GM12878 (cell line): ENCODE measurements at regions of chr6 and their contacts with region 1.

Region 1: GRCh38 chr6:137271245-137272183 is 52.3 kb upstream of the IFNGR1 start:
- DNase-seq: no peak
- ATAC-seq: peak; percentile 92
- H3K4me3 ChIP-seq: no peak overlapping the region
- H3K27ac ChIP-seq: no peak overlapping the region
- H3K4me1 ChIP-seq: peaks cover 3% of the 10 kb centered on the region
- H3K27me3 ChIP-seq: no peaks in the 10 kb centered on the region
- CTCF ChIP-seq: peak; percentile 80 to 91 (median 85)
- EP300 ChIP-seq: no peak
- POLR2A ChIP-seq: no peak
- RAD21 ChIP-seq: peak; percentile 100

Region 2: DNA sequence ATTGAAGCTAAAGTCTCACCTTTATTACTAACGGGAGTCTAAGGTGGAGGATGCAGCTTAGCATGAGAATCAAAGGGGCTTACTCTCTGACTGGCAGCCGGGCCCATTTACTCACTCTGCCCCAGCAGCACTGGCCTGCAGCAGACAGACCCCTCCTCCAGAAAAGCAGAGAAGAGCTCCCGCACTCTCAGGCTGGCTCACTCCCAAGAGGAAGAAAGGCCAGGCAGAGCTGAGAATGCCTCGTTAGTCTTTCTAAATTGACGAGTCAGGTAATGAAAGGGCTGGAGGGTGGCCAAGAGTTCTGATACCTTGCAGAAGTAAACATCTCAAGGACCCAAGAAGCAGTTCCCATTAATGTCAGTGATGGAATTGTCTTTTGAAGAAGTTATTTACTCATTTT is 182.2 kb before region 1 on chr6:
- CTCF ChIA-PET with region 1: interaction called, 13 read pairs
- POLR2A ChIA-PET with region 1: interaction called, 4 read pairs
- RAD21 ChIA-PET with region 1: interaction called, 52 read pairs
- SMC1A ChIA-PET with region 1: interaction called, 54 read pairs
- in situ Hi-C with region 1: loop called (anchors 5 kb)
- intact Hi-C with region 1: loop called (anchors 1 kb)
- DNase-seq: no peak
- ATAC-seq: no peak
- H3K4me3 ChIP-seq: no peak overlapping the region
- H3K27ac ChIP-seq: no peak overlapping the region
- H3K4me1 ChIP-seq: peaks cover 39% of the 10 kb centered on the region
- H3K27me3 ChIP-seq: no peaks in the 10 kb centered on the region
- CTCF ChIP-seq: no peak
- EP300 ChIP-seq: no peak
- POLR2A ChIP-seq: no peak
- RAD21 ChIP-seq: no peak

Region 3: GRCh38 chr6:137224799-137225198 is 46.7 kb before region 1 on chr6:
- CTCF ChIA-PET with region 1: interaction called, 5 read pairs
- POLR2A ChIA-PET with region 1: interaction called, 4 read pairs
- RAD21 ChIA-PET with region 1: interaction called, 21 read pairs
- SMC1A ChIA-PET with region 1: interaction called, 14 read pairs
- in situ Hi-C with region 1: no loop called
- intact Hi-C with region 1: loop called (anchors 2 kb)
- DNase-seq: peak; percentile 70
- ATAC-seq: peak; percentile 76
- H3K4me3 ChIP-seq: no peak overlapping the region
- H3K27ac ChIP-seq: peak overlapping the region; percentile 84
- H3K4me1 ChIP-seq: peaks cover 67% of the 10 kb centered on the region
- H3K27me3 ChIP-seq: no peaks in the 10 kb centered on the region
- CTCF ChIP-seq: no peak
- EP300 ChIP-seq: 0 out of 4 replicates have a peak, but pooled peaks of 1 of the 2 experiments have one; percentile 48
- POLR2A ChIP-seq: no peak
- RAD21 ChIP-seq: no peak

Region 4: DNA sequence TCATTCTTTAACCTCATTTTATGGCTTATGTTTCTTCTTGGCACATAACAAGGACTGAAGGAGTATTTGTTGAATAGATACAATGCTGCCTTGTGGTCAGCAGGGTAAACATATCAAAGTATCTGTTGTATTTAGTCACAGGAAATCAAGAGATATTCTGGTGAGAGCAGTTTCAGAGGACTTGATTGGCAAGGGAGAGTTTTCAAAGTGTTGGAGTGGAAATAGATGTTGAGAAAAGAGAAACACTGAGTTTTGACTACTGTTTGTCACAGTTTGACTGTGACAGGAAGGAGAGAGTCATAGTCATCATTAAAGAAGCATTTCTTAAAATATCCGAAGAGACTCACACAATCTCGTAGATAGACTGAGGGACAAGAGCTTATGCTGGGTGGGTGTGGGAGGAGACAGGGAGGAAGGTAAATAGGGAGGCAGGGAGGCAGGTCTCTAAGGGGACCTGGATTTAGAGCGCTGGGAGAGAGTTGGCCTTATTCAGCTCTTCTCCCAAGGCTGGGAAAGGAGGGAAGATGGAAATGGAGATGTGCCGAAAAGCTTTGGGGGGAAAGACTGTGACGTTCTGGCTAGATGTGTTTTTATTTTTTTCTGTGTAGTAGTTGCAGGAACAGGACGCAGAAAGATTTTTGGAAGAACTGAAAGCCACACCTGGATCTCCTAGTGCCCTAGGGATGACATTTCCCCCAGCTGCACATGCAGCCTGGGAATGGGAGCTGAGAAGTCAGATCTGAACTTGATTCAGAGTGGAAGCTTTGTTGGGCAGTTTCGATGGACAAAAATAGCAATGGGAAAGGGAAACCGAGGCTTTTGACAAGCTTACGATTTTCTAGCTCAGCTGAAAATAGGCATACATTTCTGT is 12.7 kb after region 1 on chr6:
- CTCF ChIA-PET with region 1: interaction called, 13 read pairs
- POLR2A ChIA-PET with region 1: interaction called, 3 read pairs
- RAD21 ChIA-PET with region 1: interaction called, 18 read pairs
- SMC1A ChIA-PET with region 1: interaction called, 14 read pairs
- in situ Hi-C with region 1: no loop called
- intact Hi-C with region 1: no loop called
- DNase-seq: peak; percentile 79
- ATAC-seq: peak; percentile 88
- H3K4me3 ChIP-seq: peak overlapping the region; percentile 45; the same call in 1 of the 2 replicates
- H3K27ac ChIP-seq: peak overlapping the region; percentile 76
- H3K4me1 ChIP-seq: peaks cover 25% of the 10 kb centered on the region
- H3K27me3 ChIP-seq: no peaks in the 10 kb centered on the region
- CTCF ChIP-seq: no peak
- EP300 ChIP-seq: peak; percentile 33 to 35; a peak in 2 of 4 replicates
- POLR2A ChIP-seq: no peak
- RAD21 ChIP-seq: no peak

Region 5: DNA sequence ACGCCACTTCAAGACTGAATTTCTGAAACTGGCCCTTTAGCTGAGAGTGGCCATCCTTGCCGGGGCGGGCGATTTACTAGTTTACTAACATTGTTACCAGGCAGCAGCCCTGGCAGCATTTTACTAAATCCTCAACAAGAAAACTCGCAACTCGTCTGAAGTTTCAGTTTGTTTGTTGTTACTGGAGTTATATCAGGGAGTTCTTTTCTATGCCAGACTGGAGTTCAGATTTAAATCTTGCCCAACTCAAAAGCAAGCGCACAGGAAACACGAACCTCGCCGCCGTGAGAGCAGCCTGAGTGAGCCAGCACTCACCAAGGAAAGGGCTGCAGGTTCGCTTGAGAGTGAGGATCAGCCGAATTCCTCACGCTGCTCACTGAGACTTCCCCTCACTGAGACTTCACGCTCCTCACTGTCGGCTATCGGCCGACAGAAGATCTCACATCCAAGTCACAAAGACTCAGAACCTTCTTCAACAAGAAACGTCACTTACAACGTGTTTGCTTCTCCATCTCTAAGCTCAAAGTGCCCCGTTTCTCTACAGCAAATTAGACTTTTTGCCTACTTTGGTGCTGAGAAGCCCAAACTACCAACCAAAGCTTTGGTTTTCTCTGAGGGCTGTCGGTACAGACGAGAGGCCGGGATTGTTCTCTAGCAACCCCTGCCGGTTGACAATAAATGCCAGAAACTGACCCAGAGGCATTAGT is 143.8 kb after region 1 on chr6:
- CTCF ChIA-PET with region 1: interaction called, 9 read pairs
- POLR2A ChIA-PET with region 1: no interaction called
- RAD21 ChIA-PET with region 1: interaction called, 5 read pairs
- SMC1A ChIA-PET with region 1: interaction called, 26 read pairs
- in situ Hi-C with region 1: no loop called
- intact Hi-C with region 1: loop called (anchors 2 kb)
- DNase-seq: no peak
- ATAC-seq: peak; percentile 99
- H3K4me3 ChIP-seq: peak overlapping the region; percentile 62
- H3K27ac ChIP-seq: no peak overlapping the region
- H3K4me1 ChIP-seq: peaks cover 4% of the 10 kb centered on the region
- H3K27me3 ChIP-seq: peaks cover 0 to 3% of the 10 kb centered on the region in 2 experiments; a peak in 1 of 4 replicates
- CTCF ChIP-seq: peak; percentile 79 to 89 (median 85)
- EP300 ChIP-seq: no peak
- POLR2A ChIP-seq: no peak
- RAD21 ChIP-seq: peak; percentile 84